Mammary epithelial cell (primary cell): ENCODE measurements at regions of chr9 and their contacts with region 1.

Region 1: DNA sequence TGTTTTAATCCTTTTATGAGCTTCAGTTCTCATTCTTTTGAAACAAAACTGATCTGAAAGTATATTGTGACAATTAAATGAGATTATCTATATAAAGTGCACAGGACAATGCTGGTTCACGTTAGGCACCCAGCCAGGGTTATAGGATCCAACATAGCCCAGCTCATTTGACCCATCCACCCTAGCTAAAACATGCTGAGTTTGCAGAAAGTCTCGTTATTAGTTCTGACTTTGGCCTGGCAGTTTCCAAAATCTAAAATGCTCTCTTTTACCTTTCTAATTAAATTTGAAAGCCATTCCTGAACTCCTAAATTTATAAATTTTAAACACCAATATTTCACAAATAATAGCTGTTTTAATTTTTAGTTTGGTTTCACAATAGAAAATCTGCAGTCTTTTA is 131.9 kb upstream of the PTPRD start:
- DNase-seq: no peak
- H3K4me3 ChIP-seq: no peak overlapping the region
- H3K27ac ChIP-seq: no peak overlapping the region
- H3K4me1 ChIP-seq: no peaks in the 10 kb centered on the region
- H3K27me3 ChIP-seq: no peaks in the 10 kb centered on the region
- CTCF ChIP-seq: no peak

Region 2: DNA sequence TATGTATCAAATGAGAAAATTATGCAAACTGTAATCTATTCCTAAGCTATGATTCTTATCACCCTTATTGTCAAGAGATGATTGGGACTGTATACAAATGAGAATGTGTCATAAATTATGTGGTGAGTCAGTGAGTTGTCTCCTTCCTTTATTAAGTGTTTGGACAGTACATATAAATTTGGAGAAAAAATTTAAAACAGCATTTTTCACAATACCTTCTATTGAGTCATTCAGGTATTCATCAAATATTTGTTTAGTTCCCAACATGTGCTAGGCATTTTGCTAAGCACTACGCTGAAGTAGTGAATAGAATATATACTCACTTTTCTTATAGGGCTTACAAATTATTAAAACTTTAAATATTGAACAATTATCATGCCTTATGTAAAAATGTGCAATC is 95.6 kb before region 1 on chr9:
- CTCF ChIA-PET with region 1: no interaction called
- dilution Hi-C with region 1: no loop called
- in situ Hi-C with region 1: loop called in 1 of 2 experiments (anchors 25 kb)
- intact Hi-C with region 1: no loop called
- DNase-seq: no peak
- H3K4me3 ChIP-seq: no peak overlapping the region
- H3K27ac ChIP-seq: no peak overlapping the region
- H3K4me1 ChIP-seq: no peaks in the 10 kb centered on the region
- H3K27me3 ChIP-seq: no peaks in the 10 kb centered on the region
- CTCF ChIP-seq: no peak

Region 3: DNA sequence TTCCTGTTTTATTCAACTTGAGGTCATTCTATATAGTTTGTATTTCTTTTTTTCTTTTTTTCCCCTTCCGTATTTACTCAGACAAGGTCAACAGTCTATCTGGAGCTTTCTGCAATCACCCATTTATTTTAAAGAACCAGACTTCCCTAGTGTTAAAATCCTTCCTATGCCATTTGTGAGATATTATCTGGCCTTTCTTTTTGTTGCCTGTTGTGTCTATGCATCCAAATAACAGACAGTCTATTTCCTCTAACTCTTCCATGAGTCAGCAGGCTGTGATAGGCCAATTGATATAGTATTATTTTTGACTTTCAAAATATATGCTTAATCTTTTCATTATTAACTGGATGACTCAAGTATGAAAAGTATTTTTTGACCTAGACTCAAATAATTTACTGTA is 159.3 kb after region 1 on chr9:
- CTCF ChIA-PET with region 1: no interaction called
- dilution Hi-C with region 1: no loop called
- in situ Hi-C with region 1: no loop called
- intact Hi-C with region 1: no loop called
- DNase-seq: no peak
- H3K4me3 ChIP-seq: no peak overlapping the region
- H3K27ac ChIP-seq: no peak overlapping the region
- H3K4me1 ChIP-seq: no peaks in the 10 kb centered on the region
- H3K27me3 ChIP-seq: no peaks in the 10 kb centered on the region
- CTCF ChIP-seq: no peak

Region 4: DNA sequence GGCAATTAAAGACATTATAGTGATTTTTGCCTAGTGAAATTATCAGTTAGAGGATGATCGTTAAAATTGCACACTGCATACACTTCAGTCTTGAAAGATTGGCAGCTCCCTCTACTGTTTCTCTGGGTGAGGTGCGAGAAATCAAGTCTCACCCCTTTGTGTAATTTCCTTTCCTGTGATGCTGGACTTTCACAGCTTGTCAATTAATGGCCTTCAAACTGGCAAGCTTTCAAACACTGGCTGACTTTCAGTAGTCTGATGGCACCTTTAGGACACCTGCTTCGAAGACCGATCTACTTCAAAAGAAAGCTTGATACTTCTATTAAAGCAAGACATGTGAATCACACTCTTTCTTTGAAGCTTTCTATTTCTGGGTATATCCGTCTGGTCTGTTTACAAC is 574.9 kb after region 1 on chr9:
- CTCF ChIA-PET with region 1: no interaction called
- dilution Hi-C with region 1: no loop called
- in situ Hi-C with region 1: no loop called
- intact Hi-C with region 1: no loop called
- DNase-seq: no peak
- H3K4me3 ChIP-seq: no peak overlapping the region
- H3K27ac ChIP-seq: no peak overlapping the region
- H3K4me1 ChIP-seq: no peaks in the 10 kb centered on the region
- H3K27me3 ChIP-seq: no peaks in the 10 kb centered on the region
- CTCF ChIP-seq: peak; percentile 30 to 61